ENCODE measurements at regions of chr18 and their contacts with region 1.

Region 1: GRCh38 chr18:13688191-13689136 is 37.9 kb downstream of the FAM210A start:
- DNase-seq: no peak
- ATAC-seq: peak; percentile 90

Region 2: GRCh38 chr18:13720123-13720522 is 31.7 kb after region 1 on chr18:
- intact Hi-C with region 1: loop called (anchors 5 kb)
- DNase-seq: no peak
- ATAC-seq: no peak